Mammary epithelial cell (primary cell): ENCODE measurements at regions of chr14 and their contacts with region 1.

Region 1: DNA sequence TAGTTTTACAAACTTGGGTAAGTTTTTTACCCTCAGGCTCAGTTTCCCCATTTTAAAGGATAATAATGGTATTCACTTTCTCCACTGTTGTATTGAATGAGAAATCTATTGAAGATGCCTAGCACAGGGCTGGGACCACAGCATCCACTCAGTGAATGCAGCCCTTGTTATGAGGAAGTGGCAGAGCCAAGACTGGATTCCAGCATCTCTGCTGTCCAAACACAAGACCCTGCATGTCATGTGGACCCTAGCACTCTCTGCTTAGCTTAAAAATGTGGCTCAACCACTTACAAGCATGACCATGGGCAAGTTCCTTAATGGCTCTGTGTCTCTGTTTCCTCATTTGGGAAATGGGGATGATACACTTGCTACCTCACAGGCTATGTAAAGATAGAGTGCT is 24.1 kb upstream of the TRIM9 start:
- DNase-seq: no peak
- H3K4me3 ChIP-seq: no peak overlapping the region
- H3K27ac ChIP-seq: no peak overlapping the region
- H3K4me1 ChIP-seq: peaks cover 6% of the 10 kb centered on the region
- H3K27me3 ChIP-seq: peaks cover 4% of the 10 kb centered on the region
- CTCF ChIP-seq: no peak

Region 2: GRCh38 chr14:51041108-51041531 is 77.9 kb before region 1 on chr14:
- CTCF ChIA-PET with region 1: no interaction called
- dilution Hi-C with region 1: loop called (anchors 5 kb)
- in situ Hi-C with region 1: no loop called
- intact Hi-C with region 1: no loop called
- DNase-seq: no peak
- H3K4me3 ChIP-seq: no peak overlapping the region
- H3K27ac ChIP-seq: no peak overlapping the region
- H3K4me1 ChIP-seq: no peaks in the 10 kb centered on the region
- H3K27me3 ChIP-seq: peaks cover 2% of the 10 kb centered on the region
- CTCF ChIP-seq: no peak

Region 3: GRCh38 chr14:51094901-51095853 is 23.8 kb before region 1 on chr14 and contains the start of gene TRIM9:
- CTCF ChIA-PET with region 1: no interaction called
- dilution Hi-C with region 1: no loop called
- in situ Hi-C with region 1: no loop called
- intact Hi-C with region 1: no loop called
- DNase-seq: peak; percentile 97
- H3K4me3 ChIP-seq: peak within 1 kb of the TSS; percentile 46 to 69 (median 58)
- H3K27ac ChIP-seq: no peak within 1 kb of the TSS
- H3K4me1 ChIP-seq: peaks cover 21% of the 10 kb centered on the region
- H3K27me3 ChIP-seq: peaks cover 13% of the 10 kb centered on the region
- CTCF ChIP-seq: no peak
- total RNA-seq, gene TRIM9: 0.14 to 0.67 TPM

Region 4: DNA sequence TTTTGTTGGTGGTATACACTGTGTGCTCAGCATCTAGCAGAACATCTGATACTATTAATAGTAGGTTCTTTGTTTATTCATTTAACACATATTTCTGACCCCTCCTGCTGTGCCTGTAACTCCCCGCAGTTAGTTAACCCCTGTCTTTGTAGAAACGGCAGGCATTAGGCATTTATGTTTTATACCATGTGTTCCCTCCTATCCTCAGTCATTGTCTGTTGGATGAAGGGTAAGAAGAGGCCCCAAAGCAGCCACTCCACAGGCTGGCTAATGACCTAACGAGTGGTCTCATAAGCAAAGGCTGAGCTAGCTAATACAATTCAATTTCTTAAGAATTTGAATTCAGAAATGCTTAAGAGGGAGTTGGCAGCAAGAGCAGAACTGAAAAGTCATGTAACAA is 291.9 kb after region 1 on chr14:
- CTCF ChIA-PET with region 1: no interaction called
- dilution Hi-C with region 1: no loop called
- in situ Hi-C with region 1: no loop called
- intact Hi-C with region 1: no loop called
- DNase-seq: no peak
- H3K4me3 ChIP-seq: no peak overlapping the region
- H3K27ac ChIP-seq: no peak overlapping the region
- H3K4me1 ChIP-seq: no peaks in the 10 kb centered on the region
- H3K27me3 ChIP-seq: no peaks in the 10 kb centered on the region
- CTCF ChIP-seq: no peak